ENCODE measurements at regions of chr4 and their contacts with region 1.

Region 1: DNA sequence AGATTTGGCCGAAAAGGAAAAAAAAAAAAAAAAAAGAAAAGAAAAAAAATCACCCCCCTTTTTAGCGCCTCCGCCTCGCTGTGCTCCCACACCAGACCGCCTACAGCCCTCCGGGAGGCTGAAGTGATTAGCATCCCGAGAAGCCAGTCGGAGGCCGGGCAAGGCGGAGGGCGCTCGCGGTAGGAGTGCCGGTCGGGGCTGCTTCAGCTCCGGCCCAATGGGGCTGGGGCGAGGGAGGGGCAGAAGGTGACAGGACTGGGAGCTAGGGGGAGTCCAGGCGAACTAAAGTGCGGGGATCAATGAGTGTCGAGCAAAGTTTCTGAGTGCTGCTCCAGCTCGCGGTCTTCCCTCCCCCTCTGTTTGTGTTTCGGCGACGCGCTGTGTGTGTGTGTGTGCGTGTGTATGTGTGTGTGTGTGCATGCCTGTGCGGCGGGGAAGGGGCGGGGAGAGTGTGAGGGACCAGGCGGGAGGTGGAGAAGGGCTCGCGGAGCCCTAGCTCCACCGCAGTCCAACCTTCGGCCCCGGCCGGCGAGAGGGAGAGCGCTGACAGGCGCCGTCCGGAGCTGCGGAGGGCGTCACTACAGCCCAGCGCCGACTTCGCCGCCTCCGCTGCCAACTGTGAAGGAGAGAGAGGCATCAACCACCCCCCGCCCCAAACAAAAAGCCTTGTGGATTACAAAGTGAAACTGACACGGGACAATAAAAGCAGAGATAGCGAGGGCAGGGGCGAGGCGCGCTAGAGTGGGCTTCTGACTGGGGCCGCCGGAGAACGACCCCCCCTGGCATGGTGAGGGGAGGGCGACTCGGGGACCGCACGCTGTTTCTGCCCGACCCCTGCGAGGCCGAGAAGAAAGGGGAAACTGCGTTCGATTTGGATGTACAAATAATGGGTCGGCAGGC is at the start of gene FAT4:
- DNase-seq: peak; percentile 96
- H3K4me3 ChIP-seq: peak within 1 kb of the TSS; percentile 94
- H3K27ac ChIP-seq: peak within 1 kb of the TSS; percentile 95
- H3K4me1 ChIP-seq: peaks cover 60% of the 10 kb centered on the region
- H3K27me3 ChIP-seq: no peaks in the 10 kb centered on the region
- CTCF ChIP-seq: peak; percentile 48
- total RNA-seq, gene FAT4: 6.7 TPM

Region 2: DNA sequence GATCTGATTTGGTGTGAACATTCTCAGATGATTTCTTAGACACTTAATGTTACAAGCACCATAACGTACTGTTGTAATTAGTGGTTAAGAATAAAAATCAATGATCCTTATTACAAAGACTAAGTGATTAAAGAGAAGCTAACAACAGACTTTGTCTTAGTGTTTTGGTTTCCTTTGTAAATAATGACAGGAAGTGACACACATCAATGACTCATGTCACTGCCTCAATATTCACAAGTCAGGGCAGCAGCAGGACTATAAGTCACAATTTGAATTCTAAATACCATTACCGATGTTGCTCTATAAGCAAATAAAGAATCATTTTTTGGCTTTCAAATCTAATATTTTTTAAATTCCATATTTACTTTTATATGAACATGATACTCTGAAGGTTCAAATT is 116.0 kb before region 1 on chr4:
- intact Hi-C with region 1: no loop called
- DNase-seq: no peak
- H3K4me3 ChIP-seq: no peak overlapping the region
- H3K27ac ChIP-seq: no peak overlapping the region
- H3K4me1 ChIP-seq: no peaks in the 10 kb centered on the region
- H3K27me3 ChIP-seq: no peaks in the 10 kb centered on the region
- CTCF ChIP-seq: no peak

Region 3: GRCh38 chr4:125741825-125742452 is 427.0 kb after region 1 on chr4:
- intact Hi-C with region 1: loop called (anchors 2 kb)
- DNase-seq: no peak
- H3K4me3 ChIP-seq: no peak overlapping the region
- H3K27ac ChIP-seq: no peak overlapping the region
- H3K4me1 ChIP-seq: peaks cover 21% of the 10 kb centered on the region
- H3K27me3 ChIP-seq: no peaks in the 10 kb centered on the region
- CTCF ChIP-seq: peak; percentile 68

Measured in left ventricle myocardium inferior (tissue), 1 donor.